CD8-positive, alpha-beta T cell (primary cell): ENCODE measurements at regions of chr19 and their contacts with region 1.

Region 1: GRCh38 chr19:8806661-8807060 is 25.4 kb downstream of the ZNF558 start:
- DNase-seq: no peak
- ATAC-seq: no peak
- H3K4me3 ChIP-seq: no peak overlapping the region
- H3K4me3 Mint-ChIP-seq: no peak overlapping the region
- H3K27ac ChIP-seq: no peak overlapping the region
- H3K27ac Mint-ChIP-seq: no peak overlapping the region
- H3K4me1 ChIP-seq: no peaks in the 10 kb centered on the region
- H3K4me1 Mint-ChIP-seq: no peaks in the 10 kb centered on the region
- H3K27me3 ChIP-seq: no peaks in the 10 kb centered on the region
- H3K27me3 Mint-ChIP-seq: no peaks in the 10 kb centered on the region
- CTCF ChIP-seq: no peak

Region 2: GRCh38 chr19:8835877-8836276 is 29.2 kb after region 1 on chr19:
- CTCF ChIA-PET with region 1: no interaction called
- POLR2A ChIA-PET with region 1: no interaction called
- intact Hi-C with region 1: no loop called
- DNase-seq: no peak
- ATAC-seq: no peak
- H3K4me3 ChIP-seq: no peak overlapping the region
- H3K4me3 Mint-ChIP-seq: no peak overlapping the region
- H3K27ac ChIP-seq: no peak overlapping the region
- H3K27ac Mint-ChIP-seq: no peak overlapping the region
- H3K4me1 ChIP-seq: peaks cover 13% of the 10 kb centered on the region
- H3K4me1 Mint-ChIP-seq: peaks cover 19% of the 10 kb centered on the region
- H3K27me3 ChIP-seq: no peaks in the 10 kb centered on the region
- H3K27me3 Mint-ChIP-seq: peaks cover 8% of the 10 kb centered on the region
- CTCF ChIP-seq: no peak

Region 3: DNA sequence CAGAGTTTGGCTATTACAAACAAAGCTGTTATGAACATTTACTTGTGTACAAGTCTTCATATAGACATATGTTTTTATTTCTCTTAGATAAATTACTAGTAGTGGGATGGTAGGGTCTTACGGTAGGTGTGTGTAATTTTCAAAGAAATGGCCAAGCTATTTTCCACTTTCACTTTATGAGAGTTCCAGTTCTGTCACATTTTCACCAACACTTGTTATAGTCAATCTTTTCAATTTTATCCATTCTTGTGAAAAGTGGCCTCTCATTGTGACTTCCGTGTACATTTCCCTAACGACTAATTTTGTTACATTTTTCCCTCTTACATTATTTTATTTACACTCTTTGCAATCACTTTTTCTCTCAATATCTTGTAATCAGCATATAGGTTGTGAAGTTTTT is 43.8 kb after region 1 on chr19:
- CTCF ChIA-PET with region 1: no interaction called
- POLR2A ChIA-PET with region 1: no interaction called
- intact Hi-C with region 1: loop called in 1 of 2 experiments (anchors 5 kb)
- DNase-seq: no peak
- ATAC-seq: no peak
- H3K4me3 ChIP-seq: no peak overlapping the region
- H3K4me3 Mint-ChIP-seq: no peak overlapping the region
- H3K27ac ChIP-seq: no peak overlapping the region
- H3K27ac Mint-ChIP-seq: no peak overlapping the region
- H3K4me1 ChIP-seq: no peaks in the 10 kb centered on the region
- H3K4me1 Mint-ChIP-seq: no peaks in the 10 kb centered on the region
- H3K27me3 ChIP-seq: no peaks in the 10 kb centered on the region
- H3K27me3 Mint-ChIP-seq: peaks cover 36% of the 10 kb centered on the region
- CTCF ChIP-seq: no peak